Naive thymus-derived CD4-positive, alpha-beta T cell (primary cell): ENCODE measurements at regions of chr3 and their contacts with region 1.

Region 1: DNA sequence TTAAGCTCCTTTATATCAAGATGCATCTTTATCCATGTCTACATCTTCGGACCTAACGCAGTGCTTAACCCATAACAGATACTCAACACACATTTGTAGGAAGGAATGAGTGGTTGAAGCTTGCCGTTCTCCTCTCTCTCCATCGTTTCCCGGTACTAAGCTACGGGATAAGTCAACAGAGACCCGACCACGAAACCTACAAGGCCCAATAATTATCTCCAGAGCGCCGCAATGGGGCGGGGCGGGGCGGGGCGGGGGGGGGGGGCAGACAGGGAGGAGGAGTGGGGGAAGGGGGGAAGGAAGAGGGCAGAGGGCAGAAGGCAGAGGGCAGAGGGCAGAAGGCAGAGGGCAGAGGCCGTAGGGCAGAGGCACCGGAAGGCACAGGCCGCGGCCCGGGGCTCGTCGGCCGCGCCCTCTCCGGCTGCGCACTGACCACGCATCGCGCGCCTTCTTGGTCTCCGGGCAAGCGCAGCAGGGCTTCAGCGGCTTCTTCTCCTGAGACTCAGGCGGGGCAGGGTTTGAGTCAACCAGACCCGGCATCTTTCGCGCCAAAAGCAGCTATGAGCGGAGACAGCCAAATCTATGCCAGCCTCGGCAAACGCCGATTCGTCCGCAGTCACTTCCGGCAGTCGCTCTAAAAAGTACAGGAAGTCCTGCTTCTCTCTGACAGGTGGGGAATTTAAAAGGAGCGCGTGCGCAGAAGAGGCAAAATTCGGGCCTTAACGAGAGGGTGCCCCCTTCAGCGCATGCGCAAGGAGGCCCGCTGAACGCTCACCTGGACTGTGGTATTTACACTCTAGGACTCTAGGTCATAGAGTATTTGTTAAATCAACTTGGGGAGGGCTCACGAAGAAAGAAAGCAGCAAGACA is at the start of gene COX17:
- DNase-seq: peak; percentile 87 to 98 (median 96)
- ATAC-seq: peak; percentile 91
- H3K4me3 ChIP-seq: peak within 1 kb of the TSS; percentile 62
- H3K4me3 Mint-ChIP-seq: peak within 1 kb of the TSS; percentile 78 to 98 (median 90)
- H3K27ac ChIP-seq: peak within 1 kb of the TSS; percentile 72
- H3K27ac Mint-ChIP-seq: peak within 1 kb of the TSS; percentile 94 to 99 (median 96)
- H3K4me1 ChIP-seq: peaks cover 14 to 16% of the 10 kb centered on the region in 2 donors
- H3K4me1 Mint-ChIP-seq: peaks cover 19 to 46% (median 41%) of the 10 kb centered on the region in 7 donors
- H3K27me3 ChIP-seq: no peaks in the 10 kb centered on the region
- H3K27me3 Mint-ChIP-seq: peaks cover 0 to 3% (median 0%) of the 10 kb centered on the region in 5 donors
- total RNA-seq, gene COX17: 25.6 to 55.0 (median 34.8) TPM

Region 2: GRCh38 chr3:119098619-119099222 is 578.3 kb before region 1 on chr3:
- CTCF ChIA-PET with region 1: no interaction called
- POLR2A ChIA-PET with region 1: no interaction called
- intact Hi-C with region 1: loop called in 1 of 2 experiments (anchors 5 kb)
- DNase-seq: peak in 7 of 9 donors; percentile 24 to 65 (median 54)
- ATAC-seq: peak; percentile 50
- H3K4me3 ChIP-seq: no peak overlapping the region
- H3K4me3 Mint-ChIP-seq: no peak overlapping the region
- H3K27ac ChIP-seq: no peak overlapping the region
- H3K27ac Mint-ChIP-seq: no peak overlapping the region
- H3K4me1 ChIP-seq: no peaks in the 10 kb centered on the region
- H3K4me1 Mint-ChIP-seq: peaks cover 0 to 1% (median 0%) of the 10 kb centered on the region in 7 donors
- H3K27me3 ChIP-seq: no peaks in the 10 kb centered on the region
- H3K27me3 Mint-ChIP-seq: peaks cover 0 to 4% (median 0%) of the 10 kb centered on the region in 5 donors

Region 3: GRCh38 chr3:119279101-119279554 is 397.9 kb before region 1 on chr3:
- CTCF ChIA-PET with region 1: no interaction called
- POLR2A ChIA-PET with region 1: no interaction called
- intact Hi-C with region 1: loop called (anchors 1 to 2 kb)
- DNase-seq: no peak
- ATAC-seq: no peak
- H3K4me3 ChIP-seq: no peak overlapping the region
- H3K4me3 Mint-ChIP-seq: no peak overlapping the region
- H3K27ac ChIP-seq: no peak overlapping the region
- H3K27ac Mint-ChIP-seq: no peak overlapping the region
- H3K4me1 ChIP-seq: peaks cover 0 to 7% of the 10 kb centered on the region in 2 donors
- H3K4me1 Mint-ChIP-seq: peaks cover 0 to 23% (median 11%) of the 10 kb centered on the region in 7 donors
- H3K27me3 ChIP-seq: no peaks in the 10 kb centered on the region
- H3K27me3 Mint-ChIP-seq: no peaks in the 10 kb centered on the region

Region 4: DNA sequence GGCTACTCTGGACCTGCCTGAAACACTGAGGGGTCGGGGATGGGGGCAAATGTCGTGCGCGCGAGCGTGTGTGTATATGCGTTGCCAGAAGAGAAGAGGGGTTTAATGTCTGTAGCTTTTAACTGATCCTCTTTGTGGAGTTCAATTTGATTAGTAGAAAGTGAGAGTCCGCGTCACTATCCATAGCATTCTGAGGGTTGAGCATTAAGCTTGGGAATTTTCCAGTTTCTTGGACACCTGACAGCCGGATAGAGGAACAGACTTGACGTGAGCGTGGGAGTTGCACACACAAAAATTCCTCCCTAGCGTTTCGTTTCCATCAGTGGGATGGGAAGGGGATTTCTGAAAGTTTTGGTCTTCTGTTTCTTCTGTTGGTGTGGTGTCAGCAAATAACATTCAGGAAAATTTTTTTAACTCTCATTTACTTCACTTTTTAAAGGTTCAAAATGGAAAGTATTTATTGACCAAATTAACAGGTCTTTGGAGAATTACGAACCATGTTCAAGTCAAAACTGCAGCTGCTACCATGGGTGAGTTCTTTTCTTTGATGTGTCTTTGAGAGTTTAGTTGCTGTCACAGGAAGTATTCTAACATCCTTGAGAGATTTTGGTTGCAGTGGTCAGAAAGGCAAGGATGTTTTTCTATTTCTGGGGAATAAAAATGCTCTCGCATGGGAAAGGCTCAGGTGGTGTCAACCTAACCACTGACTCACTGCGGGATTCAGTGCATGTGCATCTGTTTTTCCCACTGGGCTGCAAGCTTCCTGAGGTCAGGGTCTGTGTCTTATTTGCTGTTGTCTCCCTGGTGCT is 207.4 kb before region 1 on chr3:
- CTCF ChIA-PET with region 1: no interaction called
- POLR2A ChIA-PET with region 1: no interaction called
- intact Hi-C with region 1: loop called (anchors 1 kb)
- DNase-seq: peak in 7 of 9 donors; percentile 10 to 32 (median 24)
- ATAC-seq: peak; percentile 48
- H3K4me3 ChIP-seq: peak overlapping the region; percentile 86
- H3K4me3 Mint-ChIP-seq: peak overlapping the region; percentile 90 to 97 (median 94)
- H3K27ac ChIP-seq: peak overlapping the region; percentile 88
- H3K27ac Mint-ChIP-seq: peak overlapping the region; percentile 83 to 95 (median 89)
- H3K4me1 ChIP-seq: peaks cover 12% of the 10 kb centered on the region in 2 donors
- H3K4me1 Mint-ChIP-seq: peaks cover 27 to 35% (median 30%) of the 10 kb centered on the region in 7 donors
- H3K27me3 ChIP-seq: no peaks in the 10 kb centered on the region
- H3K27me3 Mint-ChIP-seq: no peaks in the 10 kb centered on the region

Region 5: GRCh38 chr3:119490153-119490552 is 186.9 kb before region 1 on chr3:
- CTCF ChIA-PET with region 1: no interaction called
- POLR2A ChIA-PET with region 1: no interaction called
- intact Hi-C with region 1: no loop called
- DNase-seq: no peak
- ATAC-seq: no peak
- H3K4me3 ChIP-seq: no peak overlapping the region
- H3K4me3 Mint-ChIP-seq: no peak overlapping the region
- H3K27ac ChIP-seq: no peak overlapping the region
- H3K27ac Mint-ChIP-seq: peak overlapping the region in 2 of 9 donors; percentile 9 to 19
- H3K4me1 ChIP-seq: no peaks in the 10 kb centered on the region
- H3K4me1 Mint-ChIP-seq: peaks cover 0 to 5% (median 0%) of the 10 kb centered on the region in 7 donors
- H3K27me3 ChIP-seq: no peaks in the 10 kb centered on the region
- H3K27me3 Mint-ChIP-seq: no peaks in the 10 kb centered on the region

Region 6: GRCh38 chr3:119600732-119601131 is 76.3 kb before region 1 on chr3:
- CTCF ChIA-PET with region 1: no interaction called
- POLR2A ChIA-PET with region 1: no interaction called
- intact Hi-C with region 1: loop called in 1 of 2 experiments (anchors 2 kb)
- DNase-seq: no peak
- ATAC-seq: peak; percentile 79
- H3K4me3 ChIP-seq: no peak overlapping the region
- H3K4me3 Mint-ChIP-seq: no peak overlapping the region
- H3K27ac ChIP-seq: no peak overlapping the region
- H3K27ac Mint-ChIP-seq: peak overlapping the region in 1 of 9 donors; percentile 14
- H3K4me1 ChIP-seq: no peaks in the 10 kb centered on the region
- H3K4me1 Mint-ChIP-seq: peaks cover 0 to 39% (median 1%) of the 10 kb centered on the region in 7 donors
- H3K27me3 ChIP-seq: no peaks in the 10 kb centered on the region
- H3K27me3 Mint-ChIP-seq: peaks cover 0 to 4% (median 0%) of the 10 kb centered on the region in 5 donors

Region 7: GRCh38 chr3:119716998-119717397 is 40.0 kb after region 1 on chr3:
- CTCF ChIA-PET with region 1: no interaction called
- POLR2A ChIA-PET with region 1: no interaction called
- intact Hi-C with region 1: no loop called
- DNase-seq: no peak
- ATAC-seq: no peak
- H3K4me3 ChIP-seq: no peak overlapping the region
- H3K4me3 Mint-ChIP-seq: no peak overlapping the region
- H3K27ac ChIP-seq: no peak overlapping the region
- H3K27ac Mint-ChIP-seq: no peak overlapping the region
- H3K4me1 ChIP-seq: no peaks in the 10 kb centered on the region
- H3K4me1 Mint-ChIP-seq: no peaks in the 10 kb centered on the region
- H3K27me3 ChIP-seq: no peaks in the 10 kb centered on the region
- H3K27me3 Mint-ChIP-seq: peaks cover 0 to 15% (median 0%) of the 10 kb centered on the region in 5 donors

Region 8: DNA sequence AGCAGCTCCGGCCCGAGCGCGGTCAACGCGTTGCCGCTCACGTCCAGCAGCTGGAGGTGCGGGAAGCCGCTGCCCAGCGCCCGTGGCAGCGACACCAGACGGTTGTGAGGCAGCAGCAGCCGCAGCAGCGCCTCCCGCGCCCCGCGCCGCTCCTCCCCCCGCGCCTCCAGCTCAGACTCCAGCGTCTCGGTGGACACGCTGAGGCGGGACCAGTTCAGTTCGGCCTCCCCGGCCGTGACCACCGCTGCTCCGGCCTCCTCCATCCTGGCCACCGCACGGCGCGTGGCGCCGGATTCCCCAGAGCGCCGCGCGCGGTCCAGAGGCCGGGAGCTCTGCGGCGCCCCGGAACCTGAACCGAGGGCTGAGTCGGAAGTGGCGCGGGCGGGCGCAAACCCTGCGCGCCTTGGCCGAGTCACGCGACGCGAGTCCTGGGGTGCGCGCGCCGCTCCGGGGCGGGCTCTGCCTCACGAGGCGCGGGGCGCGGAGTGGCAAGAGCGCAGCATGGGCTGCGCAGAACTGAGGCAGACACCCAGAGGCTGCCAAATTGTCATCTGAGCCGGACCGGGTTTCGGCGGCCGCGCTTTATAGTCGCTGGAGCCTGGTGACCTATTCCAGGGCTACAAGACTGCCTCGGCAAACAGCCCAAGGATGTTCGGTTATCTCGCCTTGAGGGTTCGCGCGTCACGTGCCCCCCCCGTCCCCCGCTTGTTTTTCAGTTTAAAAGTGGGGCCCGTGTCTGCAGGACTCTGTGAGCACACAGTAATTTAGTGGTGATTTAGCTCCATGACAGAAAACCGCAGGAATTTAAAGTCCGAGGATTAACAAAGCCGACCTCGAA is 672.2 kb after region 1 on chr3 and contains the start of gene LRRC58:
- CTCF ChIA-PET with region 1: no interaction called
- POLR2A ChIA-PET with region 1: interaction called, 7 read pairs
- intact Hi-C with region 1: loop called in 1 of 2 experiments (anchors 1 kb)
- DNase-seq: peak; percentile 85 to 95 (median 94)
- ATAC-seq: peak; percentile 95
- H3K4me3 ChIP-seq: peak within 1 kb of the TSS; percentile 91
- H3K4me3 Mint-ChIP-seq: peak within 1 kb of the TSS; percentile 85 to 96 (median 94)
- H3K27ac ChIP-seq: peak within 1 kb of the TSS; percentile 76
- H3K27ac Mint-ChIP-seq: peak within 1 kb of the TSS; percentile 87 to 97 (median 93)
- H3K4me1 ChIP-seq: peaks cover 20 to 26% of the 10 kb centered on the region in 2 donors
- H3K4me1 Mint-ChIP-seq: peaks cover 39 to 54% (median 48%) of the 10 kb centered on the region in 7 donors
- H3K27me3 ChIP-seq: no peaks in the 10 kb centered on the region
- H3K27me3 Mint-ChIP-seq: peaks cover 0 to 29% (median 0%) of the 10 kb centered on the region in 5 donors
- total RNA-seq, gene LRRC58: 12.3 to 24.1 (median 20.8) TPM